ENCODE measurements at regions of chr16 and their contacts with region 1.

Region 1: DNA sequence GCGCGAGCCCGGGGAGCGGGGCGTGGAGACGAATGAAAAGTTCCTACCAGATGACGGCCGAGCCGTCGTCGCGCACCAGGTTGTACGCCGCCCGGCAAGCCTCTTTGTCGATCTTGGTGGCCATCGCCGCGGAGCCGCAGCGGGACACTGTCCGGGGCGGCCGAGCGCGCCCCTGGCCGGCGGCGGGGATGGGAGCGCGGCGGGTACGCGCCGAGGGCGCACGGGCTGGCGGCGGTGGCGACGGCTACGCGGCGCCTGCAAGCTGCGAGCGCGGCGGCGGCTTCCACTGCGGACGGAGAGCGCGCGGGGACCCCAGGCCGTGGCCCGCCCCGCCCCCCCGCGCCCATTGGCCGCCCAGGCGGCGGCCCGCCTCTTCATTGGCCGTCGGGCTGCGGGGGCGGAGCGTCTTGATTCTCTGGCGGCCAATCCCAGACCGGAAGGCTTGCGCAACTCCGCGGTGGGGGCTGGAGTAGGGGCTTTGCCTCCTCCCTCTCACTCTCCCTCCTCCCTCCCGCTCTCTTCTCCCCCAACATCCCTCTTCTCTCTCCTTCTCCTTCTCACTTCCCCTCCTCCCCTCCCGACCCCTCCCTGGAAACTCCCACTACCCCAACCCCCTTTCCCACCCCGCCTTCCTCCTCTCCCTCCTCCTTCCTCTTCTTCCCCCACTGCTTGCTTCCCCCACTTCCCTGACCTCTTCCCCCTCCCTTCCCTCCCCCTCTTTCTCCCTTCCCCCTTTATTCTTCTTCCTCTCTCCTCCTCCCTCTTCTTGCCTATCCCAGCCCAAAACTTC is at the start of gene COTL1:
- DNase-seq: peak; percentile 96
- ATAC-seq: peak; percentile 88
- H3K4me3 ChIP-seq: peak within 1 kb of the TSS; percentile 73 to 96 (median 85)
- H3K4me3 Mint-ChIP-seq: peak within 1 kb of the TSS; percentile 88
- H3K27ac ChIP-seq: peak within 1 kb of the TSS; percentile 4 to 72
- H3K27ac Mint-ChIP-seq: peak within 1 kb of the TSS; percentile 90
- H3K4me1 ChIP-seq: peaks cover 51 to 67% of the 10 kb centered on the region in 2 donors
- H3K4me1 Mint-ChIP-seq: peaks cover 72% of the 10 kb centered on the region
- H3K27me3 ChIP-seq: no peaks in the 10 kb centered on the region
- H3K27me3 Mint-ChIP-seq: no peaks in the 10 kb centered on the region
- CTCF ChIP-seq: no peak
- total RNA-seq, gene COTL1: 245 and 264 TPM in 2 replicates

Region 2: GRCh38 chr16:84414789-84415326 is 203.1 kb before region 1 on chr16:
- CTCF ChIA-PET with region 1: no interaction called
- POLR2A ChIA-PET with region 1: no interaction called
- intact Hi-C with region 1: no loop called
- DNase-seq: no peak
- ATAC-seq: no peak
- H3K4me3 ChIP-seq: no peak overlapping the region
- H3K4me3 Mint-ChIP-seq: no peak overlapping the region
- H3K27ac ChIP-seq: no peak overlapping the region
- H3K27ac Mint-ChIP-seq: no peak overlapping the region
- H3K4me1 ChIP-seq: no peaks in the 10 kb centered on the region
- H3K4me1 Mint-ChIP-seq: no peaks in the 10 kb centered on the region
- H3K27me3 ChIP-seq: no peaks in the 10 kb centered on the region
- H3K27me3 Mint-ChIP-seq: peaks cover 34% of the 10 kb centered on the region
- CTCF ChIP-seq: no peak

Region 3: DNA sequence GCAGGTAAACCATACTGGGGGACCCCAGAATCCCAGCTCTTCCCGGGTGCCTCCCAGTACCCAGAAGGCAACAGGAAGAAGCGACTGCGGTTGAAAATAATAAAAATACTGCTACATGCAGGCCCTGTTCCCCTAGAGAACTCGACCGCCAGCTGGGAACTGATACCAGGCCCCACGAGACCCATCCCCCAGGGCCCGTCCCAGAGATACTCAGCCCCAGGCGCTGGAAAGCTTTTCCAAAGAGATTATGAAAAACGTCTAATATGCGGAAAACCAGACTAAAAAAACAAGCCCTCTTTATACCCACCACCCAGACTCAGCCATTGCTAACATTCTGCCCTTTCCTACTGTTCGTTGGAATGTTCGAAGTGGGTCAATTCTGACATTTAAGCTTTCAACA is 100.6 kb before region 1 on chr16:
- CTCF ChIA-PET with region 1: interaction called, 518 read pairs
- POLR2A ChIA-PET with region 1: interaction called, 4 read pairs
- intact Hi-C with region 1: no loop called
- DNase-seq: no peak
- ATAC-seq: no peak
- H3K4me3 ChIP-seq: no peak overlapping the region
- H3K4me3 Mint-ChIP-seq: no peak overlapping the region
- H3K27ac ChIP-seq: no peak overlapping the region
- H3K27ac Mint-ChIP-seq: peak overlapping the region; percentile 26
- H3K4me1 ChIP-seq: peaks cover 20 to 27% of the 10 kb centered on the region in 2 donors
- H3K4me1 Mint-ChIP-seq: peaks cover 23% of the 10 kb centered on the region
- H3K27me3 ChIP-seq: no peaks in the 10 kb centered on the region
- H3K27me3 Mint-ChIP-seq: no peaks in the 10 kb centered on the region
- CTCF ChIP-seq: no peak

Region 4: DNA sequence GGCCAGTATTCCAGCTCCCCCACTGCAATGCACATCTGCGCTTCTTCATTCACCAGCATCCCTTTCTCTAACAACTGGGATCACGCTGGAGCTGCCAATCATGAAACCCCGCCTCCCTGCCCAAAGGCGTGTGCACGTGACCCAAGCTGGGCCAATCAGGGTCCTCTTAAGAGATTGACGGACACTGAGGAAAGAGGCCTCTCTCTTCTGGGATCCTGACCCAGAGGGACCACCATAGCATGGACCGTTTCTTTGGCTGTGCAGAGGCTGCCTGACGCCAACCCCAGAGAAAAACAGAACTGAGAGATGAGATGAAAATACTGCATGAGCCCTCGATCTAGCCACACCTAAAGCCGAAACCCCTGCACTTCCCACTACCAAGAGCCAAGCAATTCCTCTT is 32.1 kb before region 1 on chr16:
- CTCF ChIA-PET with region 1: interaction called, 27 read pairs
- POLR2A ChIA-PET with region 1: interaction called, 7 read pairs
- intact Hi-C with region 1: no loop called
- DNase-seq: peak; percentile 73
- ATAC-seq: peak; percentile 84
- H3K4me3 ChIP-seq: peak overlapping the region in 3 of 5 experiments; percentile 20 to 43 (median 40)
- H3K4me3 Mint-ChIP-seq: peak overlapping the region; percentile 78
- H3K27ac ChIP-seq: peak overlapping the region; percentile 37 to 41
- H3K27ac Mint-ChIP-seq: peak overlapping the region; percentile 88
- H3K4me1 ChIP-seq: peaks cover 30 to 63% of the 10 kb centered on the region in 2 donors
- H3K4me1 Mint-ChIP-seq: peaks cover 56% of the 10 kb centered on the region
- H3K27me3 ChIP-seq: no peaks in the 10 kb centered on the region
- H3K27me3 Mint-ChIP-seq: no peaks in the 10 kb centered on the region
- CTCF ChIP-seq: no peak

Region 5: DNA sequence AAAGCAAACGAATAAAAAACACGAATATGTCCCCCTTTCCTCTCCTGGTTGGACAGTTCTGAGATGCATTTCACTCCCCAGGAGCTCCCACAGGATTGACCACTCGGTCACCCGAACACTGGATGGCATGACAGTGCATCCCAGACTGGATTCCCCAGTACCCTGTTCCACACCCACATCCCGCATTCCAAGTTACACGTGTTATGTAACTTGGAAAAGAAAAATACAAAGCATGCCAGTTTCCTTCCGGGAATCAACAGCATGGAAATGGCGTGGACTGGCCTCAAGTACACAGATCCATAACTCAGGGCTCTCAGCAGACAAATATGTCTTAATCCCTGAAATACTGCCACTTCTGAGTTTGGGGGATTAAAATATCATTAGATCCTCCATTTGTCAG is 17.7 kb after region 1 on chr16:
- CTCF ChIA-PET with region 1: interaction called, 34 read pairs
- POLR2A ChIA-PET with region 1: no interaction called
- intact Hi-C with region 1: no loop called
- DNase-seq: no peak
- ATAC-seq: no peak
- H3K4me3 ChIP-seq: no peak overlapping the region
- H3K4me3 Mint-ChIP-seq: no peak overlapping the region
- H3K27ac ChIP-seq: no peak overlapping the region
- H3K27ac Mint-ChIP-seq: no peak overlapping the region
- H3K4me1 ChIP-seq: peaks cover 23 to 45% of the 10 kb centered on the region in 2 donors
- H3K4me1 Mint-ChIP-seq: peaks cover 46% of the 10 kb centered on the region
- H3K27me3 ChIP-seq: no peaks in the 10 kb centered on the region
- H3K27me3 Mint-ChIP-seq: no peaks in the 10 kb centered on the region
- CTCF ChIP-seq: no peak

Region 6: GRCh38 chr16:84672276-84673202 is 54.6 kb after region 1 on chr16:
- CTCF ChIA-PET with region 1: interaction called, 37 read pairs
- POLR2A ChIA-PET with region 1: no interaction called
- intact Hi-C with region 1: loop called (anchors 2 kb)
- DNase-seq: peak; percentile 82
- ATAC-seq: peak; percentile 96
- H3K4me3 ChIP-seq: no peak overlapping the region
- H3K4me3 Mint-ChIP-seq: no peak overlapping the region
- H3K27ac ChIP-seq: no peak overlapping the region
- H3K27ac Mint-ChIP-seq: peak overlapping the region; percentile 28
- H3K4me1 ChIP-seq: peaks cover 0 to 15% of the 10 kb centered on the region in 2 donors
- H3K4me1 Mint-ChIP-seq: peaks cover 10% of the 10 kb centered on the region
- H3K27me3 ChIP-seq: no peaks in the 10 kb centered on the region
- H3K27me3 Mint-ChIP-seq: peaks cover 3% of the 10 kb centered on the region
- CTCF ChIP-seq: peak; percentile 91

Region 7: DNA sequence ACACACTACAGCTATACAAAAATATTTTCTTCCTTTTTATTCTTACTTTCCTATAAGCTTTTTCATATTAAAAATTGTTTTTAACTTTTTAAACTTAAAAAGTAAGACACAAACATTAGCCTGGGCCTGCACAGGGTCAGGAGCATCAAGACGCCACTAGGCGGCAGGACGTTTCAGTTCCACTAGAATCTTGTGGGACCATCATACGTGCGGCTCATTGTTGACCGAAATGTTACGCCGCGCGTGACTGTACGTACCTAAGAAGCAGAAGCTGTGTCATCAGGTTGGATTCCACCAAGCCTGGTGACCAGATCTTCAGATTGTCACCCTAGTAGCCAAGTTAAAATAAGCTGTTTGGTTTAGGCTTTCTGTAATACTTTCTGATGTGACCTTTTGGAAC is 128.9 kb after region 1 on chr16:
- CTCF ChIA-PET with region 1: interaction called, 536 read pairs
- POLR2A ChIA-PET with region 1: no interaction called
- intact Hi-C with region 1: no loop called
- DNase-seq: no peak
- ATAC-seq: no peak
- H3K4me3 ChIP-seq: no peak overlapping the region
- H3K4me3 Mint-ChIP-seq: no peak overlapping the region
- H3K27ac ChIP-seq: no peak overlapping the region
- H3K27ac Mint-ChIP-seq: no peak overlapping the region
- H3K4me1 ChIP-seq: peaks cover 16 to 19% of the 10 kb centered on the region in 2 donors
- H3K4me1 Mint-ChIP-seq: peaks cover 33% of the 10 kb centered on the region
- H3K27me3 ChIP-seq: no peaks in the 10 kb centered on the region
- H3K27me3 Mint-ChIP-seq: no peaks in the 10 kb centered on the region
- CTCF ChIP-seq: peak; percentile 29

Region 8: DNA sequence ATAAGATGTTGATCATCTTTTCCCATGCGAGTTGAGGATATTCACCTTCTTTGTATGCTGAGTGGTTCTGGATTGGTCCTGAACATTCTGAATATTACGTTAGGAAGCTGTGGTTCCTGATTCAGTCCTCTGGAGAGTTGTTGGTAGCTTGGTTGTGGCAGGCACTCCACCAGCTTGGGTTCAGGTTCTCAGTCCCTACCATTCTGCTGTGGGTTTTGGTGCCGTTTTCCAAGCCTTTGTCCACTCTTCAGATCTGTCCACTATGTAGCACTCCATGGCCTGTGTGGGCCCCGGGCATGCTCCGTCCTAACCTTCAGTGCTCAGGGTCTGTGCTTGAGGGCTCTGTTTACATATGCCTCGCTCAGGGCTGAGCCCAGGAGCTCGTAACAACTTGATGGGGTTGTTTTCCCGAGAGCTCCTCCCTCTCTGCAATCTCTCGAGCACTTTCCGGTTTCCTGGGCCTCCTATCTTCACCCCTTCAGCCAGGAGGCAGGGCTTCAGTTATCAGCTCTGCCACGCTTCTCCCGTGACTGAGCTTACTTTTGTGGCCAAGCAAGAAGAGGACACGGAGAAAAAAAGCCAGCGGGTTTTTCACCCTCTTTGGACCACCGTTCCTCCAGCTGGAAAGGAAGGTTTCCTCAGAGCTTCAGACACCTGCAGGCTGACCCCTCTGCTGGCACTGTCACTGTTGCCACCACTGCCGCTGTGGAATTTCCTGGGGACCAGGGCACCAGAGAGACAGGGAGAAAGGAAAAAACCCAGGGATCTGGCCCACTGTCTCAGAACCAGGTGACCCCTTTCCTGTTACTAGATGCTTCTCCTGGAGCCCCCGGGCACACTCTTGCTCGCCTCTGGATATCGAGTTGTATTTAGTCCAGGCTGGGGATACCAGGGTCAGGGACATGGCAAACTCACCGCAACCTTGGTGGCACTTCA is 429.2 kb after region 1 on chr16:
- CTCF ChIA-PET with region 1: no interaction called
- POLR2A ChIA-PET with region 1: no interaction called
- intact Hi-C with region 1: no loop called
- DNase-seq: no peak
- ATAC-seq: no peak
- H3K4me3 ChIP-seq: no peak overlapping the region
- H3K4me3 Mint-ChIP-seq: no peak overlapping the region
- H3K27ac ChIP-seq: no peak overlapping the region
- H3K27ac Mint-ChIP-seq: no peak overlapping the region
- H3K4me1 ChIP-seq: no peaks in the 10 kb centered on the region
- H3K4me1 Mint-ChIP-seq: no peaks in the 10 kb centered on the region
- H3K27me3 ChIP-seq: peaks cover 0 to 19% (median 0%) of the 10 kb centered on the region in 4 experiments
- H3K27me3 Mint-ChIP-seq: peaks cover 40% of the 10 kb centered on the region
- CTCF ChIP-seq: no peak